CD4-positive, alpha-beta memory T cell (primary cell): ENCODE measurements at regions of chr2 and their contacts with region 1.

Region 1: GRCh38 chr2:54558188-54559005 is 102.3 kb downstream of the SPTBN1 start:
- DNase-seq: peak; percentile 74 to 85 (median 75)
- H3K4me3 ChIP-seq: peak overlapping the region; percentile 94 to 99
- H3K4me3 Mint-ChIP-seq: peak overlapping the region; percentile 94 to 100 (median 98)
- H3K27ac ChIP-seq: peak overlapping the region; percentile 83
- H3K27ac Mint-ChIP-seq: peak overlapping the region; percentile 88 to 97 (median 94)
- H3K4me1 ChIP-seq: peaks cover 32% of the 10 kb centered on the region
- H3K4me1 Mint-ChIP-seq: peaks cover 34 to 68% (median 40%) of the 10 kb centered on the region in 4 donors
- H3K27me3 ChIP-seq: no peaks in the 10 kb centered on the region
- H3K27me3 Mint-ChIP-seq: no peaks in the 10 kb centered on the region

Region 2: GRCh38 chr2:53970724-53971602 is 587.4 kb before region 1 on chr2 and contains the start of gene PSME4:
- CTCF ChIA-PET with region 1: no interaction called
- POLR2A ChIA-PET with region 1: interaction called, 3 read pairs
- intact Hi-C with region 1: loop called (anchors 10 kb)
- DNase-seq: peak; percentile 89 to 94 (median 89)
- H3K4me3 ChIP-seq: peak within 1 kb of the TSS; percentile 97 to 99
- H3K4me3 Mint-ChIP-seq: peak within 1 kb of the TSS; percentile 89 to 100 (median 96)
- H3K27ac ChIP-seq: peak within 1 kb of the TSS; percentile 90
- H3K27ac Mint-ChIP-seq: peak within 1 kb of the TSS; percentile 93 to 99 (median 98)
- H3K4me1 ChIP-seq: peaks cover 51% of the 10 kb centered on the region
- H3K4me1 Mint-ChIP-seq: peaks cover 41 to 67% (median 48%) of the 10 kb centered on the region in 4 donors
- H3K27me3 ChIP-seq: no peaks in the 10 kb centered on the region
- H3K27me3 Mint-ChIP-seq: no peaks in the 10 kb centered on the region
- total RNA-seq, gene PSME4: 41.7 to 49.9 TPM

Region 3: GRCh38 chr2:54149638-54150441 is 408.6 kb before region 1 on chr2:
- CTCF ChIA-PET with region 1: no interaction called
- POLR2A ChIA-PET with region 1: no interaction called
- intact Hi-C with region 1: no loop called
- DNase-seq: no peak
- H3K4me3 ChIP-seq: no peak overlapping the region
- H3K4me3 Mint-ChIP-seq: no peak overlapping the region
- H3K27ac ChIP-seq: no peak overlapping the region
- H3K27ac Mint-ChIP-seq: no peak overlapping the region
- H3K4me1 ChIP-seq: no peaks in the 10 kb centered on the region
- H3K4me1 Mint-ChIP-seq: no peaks in the 10 kb centered on the region
- H3K27me3 ChIP-seq: no peaks in the 10 kb centered on the region
- H3K27me3 Mint-ChIP-seq: no peaks in the 10 kb centered on the region

Region 4: DNA sequence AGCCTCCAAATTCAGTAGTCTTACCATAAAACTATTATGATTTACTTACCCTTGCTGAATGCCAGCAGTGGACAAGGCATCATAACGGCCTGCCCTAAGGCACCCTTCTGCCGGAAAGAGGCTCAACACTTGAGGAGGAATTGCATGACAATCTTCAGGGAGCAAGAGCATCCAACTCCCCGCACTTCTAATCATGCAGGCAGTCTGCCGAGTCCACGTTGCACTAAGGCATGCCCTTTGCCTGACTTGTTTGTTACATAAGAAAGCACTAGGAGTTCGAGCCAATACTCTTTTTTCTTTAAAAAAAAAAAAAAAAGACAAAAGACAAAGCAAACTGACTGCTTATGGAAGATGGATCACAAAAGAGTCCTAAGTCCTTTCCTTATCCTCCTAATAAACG is 120.1 kb before region 1 on chr2:
- CTCF ChIA-PET with region 1: no interaction called
- POLR2A ChIA-PET with region 1: no interaction called
- intact Hi-C with region 1: no loop called
- DNase-seq: no peak
- H3K4me3 ChIP-seq: no peak overlapping the region
- H3K4me3 Mint-ChIP-seq: no peak overlapping the region
- H3K27ac ChIP-seq: no peak overlapping the region
- H3K27ac Mint-ChIP-seq: no peak overlapping the region
- H3K4me1 ChIP-seq: no peaks in the 10 kb centered on the region
- H3K4me1 Mint-ChIP-seq: no peaks in the 10 kb centered on the region
- H3K27me3 ChIP-seq: no peaks in the 10 kb centered on the region
- H3K27me3 Mint-ChIP-seq: peaks cover 3 to 8% of the 10 kb centered on the region in 2 donors

Region 5: DNA sequence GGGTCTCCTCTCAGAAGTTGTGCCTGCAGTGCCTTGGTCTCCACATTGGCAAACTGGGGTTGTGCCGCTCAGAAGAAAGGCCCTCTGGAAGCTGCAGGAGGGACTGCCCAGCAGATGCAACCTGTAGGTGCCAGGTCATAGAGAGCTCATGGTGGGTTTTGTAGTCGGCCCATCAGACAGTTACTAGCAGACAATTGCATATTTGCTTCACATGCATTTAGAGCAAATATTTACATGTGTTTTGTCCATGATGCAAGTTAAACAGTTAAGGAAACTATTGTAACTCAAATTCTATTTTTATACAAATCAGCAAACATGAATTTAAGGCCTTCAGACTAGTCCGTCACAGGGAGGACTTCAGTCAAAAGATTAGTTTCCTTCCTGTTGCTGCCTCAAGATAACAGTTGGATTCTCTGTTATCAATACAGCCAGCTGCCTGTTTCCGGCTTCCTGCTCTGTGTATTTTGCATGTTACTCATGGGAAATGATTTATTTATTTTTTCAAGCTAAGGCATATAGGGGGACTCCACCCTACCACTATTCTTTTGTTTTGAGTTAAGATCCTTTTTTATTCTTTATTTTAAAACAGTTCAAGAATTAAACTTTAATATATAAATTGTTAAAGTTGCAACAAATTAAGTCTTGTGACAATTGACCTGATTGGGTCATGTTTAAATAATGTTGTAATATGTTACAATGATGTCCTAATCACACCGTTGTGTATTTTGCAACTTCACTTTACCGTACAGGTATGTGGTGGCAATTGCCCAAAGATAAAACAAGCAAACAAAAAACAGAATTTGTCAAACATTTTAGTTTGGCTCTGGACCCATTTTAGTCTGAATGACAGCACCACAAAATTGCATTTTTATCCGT is 31.2 kb after region 1 on chr2:
- CTCF ChIA-PET with region 1: interaction called, 10 read pairs
- POLR2A ChIA-PET with region 1: interaction called, 304 read pairs
- intact Hi-C with region 1: loop called (anchors 1 kb)
- DNase-seq: peak; percentile 47 to 73 (median 50)
- H3K4me3 ChIP-seq: peak overlapping the region in 1 of 2 donors; percentile 13
- H3K4me3 Mint-ChIP-seq: peak overlapping the region; percentile 42 to 82 (median 66)
- H3K27ac ChIP-seq: peak overlapping the region; percentile 54
- H3K27ac Mint-ChIP-seq: peak overlapping the region; percentile 89 to 95 (median 91)
- H3K4me1 ChIP-seq: peaks cover 88% of the 10 kb centered on the region
- H3K4me1 Mint-ChIP-seq: peaks cover 64 to 88% (median 78%) of the 10 kb centered on the region in 4 donors
- H3K27me3 ChIP-seq: no peaks in the 10 kb centered on the region
- H3K27me3 Mint-ChIP-seq: no peaks in the 10 kb centered on the region

Region 6: GRCh38 chr2:54606393-54606969 is 48.1 kb after region 1 on chr2:
- CTCF ChIA-PET with region 1: interaction called, 26 read pairs
- POLR2A ChIA-PET with region 1: interaction called, 304 read pairs
- intact Hi-C with region 1: no loop called
- DNase-seq: peak in 1 of 5 donors; percentile 52
- H3K4me3 ChIP-seq: no peak overlapping the region
- H3K4me3 Mint-ChIP-seq: peak overlapping the region in 7 of 8 donors; percentile 27 to 74 (median 63)
- H3K27ac ChIP-seq: no peak overlapping the region
- H3K27ac Mint-ChIP-seq: peak overlapping the region in 6 of 7 donors; percentile 63 to 93 (median 81)
- H3K4me1 ChIP-seq: peaks cover 66% of the 10 kb centered on the region
- H3K4me1 Mint-ChIP-seq: peaks cover 68 to 88% (median 81%) of the 10 kb centered on the region in 4 donors
- H3K27me3 ChIP-seq: no peaks in the 10 kb centered on the region
- H3K27me3 Mint-ChIP-seq: no peaks in the 10 kb centered on the region

Region 7: GRCh38 chr2:54624591-54625071 is 66.2 kb after region 1 on chr2:
- CTCF ChIA-PET with region 1: interaction called, 12 read pairs
- POLR2A ChIA-PET with region 1: interaction called, 16 read pairs
- intact Hi-C with region 1: no loop called
- DNase-seq: no peak
- H3K4me3 ChIP-seq: no peak overlapping the region
- H3K4me3 Mint-ChIP-seq: no peak overlapping the region
- H3K27ac ChIP-seq: no peak overlapping the region
- H3K27ac Mint-ChIP-seq: peak overlapping the region in 1 of 7 donors; percentile 62
- H3K4me1 ChIP-seq: no peaks in the 10 kb centered on the region
- H3K4me1 Mint-ChIP-seq: peaks cover under 1 to 14% (median 4%) of the 10 kb centered on the region in 4 donors
- H3K27me3 ChIP-seq: no peaks in the 10 kb centered on the region
- H3K27me3 Mint-ChIP-seq: no peaks in the 10 kb centered on the region

Region 8: DNA sequence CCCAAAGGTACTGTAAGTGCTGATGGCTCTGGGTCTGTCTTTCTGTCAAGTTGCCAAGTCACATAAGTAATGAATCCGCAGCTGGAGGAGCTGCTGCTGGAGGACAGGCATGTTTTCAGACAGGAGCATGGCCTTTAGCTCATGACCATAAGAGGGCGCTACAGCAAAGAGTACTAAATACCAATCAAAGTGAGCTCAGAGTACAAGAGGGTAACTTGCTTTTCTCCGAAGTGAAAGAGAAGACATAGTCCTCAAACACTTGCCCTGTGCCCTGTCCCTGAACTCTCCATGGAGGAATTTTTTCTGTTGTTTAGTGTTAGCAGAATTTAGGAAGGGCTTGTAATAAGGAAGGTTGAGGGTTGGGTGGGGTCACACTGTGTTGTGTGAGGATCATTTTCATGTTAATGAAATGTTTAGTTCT is 107.0 kb after region 1 on chr2:
- CTCF ChIA-PET with region 1: interaction called, 19 read pairs
- POLR2A ChIA-PET with region 1: interaction called, 4 read pairs
- intact Hi-C with region 1: no loop called
- DNase-seq: peak; percentile 11 to 52 (median 34)
- H3K4me3 ChIP-seq: no peak overlapping the region
- H3K4me3 Mint-ChIP-seq: no peak overlapping the region
- H3K27ac ChIP-seq: no peak overlapping the region
- H3K27ac Mint-ChIP-seq: peak overlapping the region in 6 of 7 donors; percentile 9 to 85 (median 70)
- H3K4me1 ChIP-seq: no peaks in the 10 kb centered on the region
- H3K4me1 Mint-ChIP-seq: peaks cover 0 to 13% (median 3%) of the 10 kb centered on the region in 4 donors
- H3K27me3 ChIP-seq: no peaks in the 10 kb centered on the region
- H3K27me3 Mint-ChIP-seq: no peaks in the 10 kb centered on the region